CD8-positive, alpha-beta T cell (primary cell): ENCODE measurements at regions of chr15 and their contacts with region 1.

Region 1: GRCh38 chr15:74382004-74382816 is 14.8 kb upstream of the CYP11A1 start:
- DNase-seq: peak; percentile 49 to 88 (median 81)
- ATAC-seq: peak; percentile 27
- H3K4me3 ChIP-seq: no peak overlapping the region
- H3K4me3 Mint-ChIP-seq: no peak overlapping the region
- H3K27ac ChIP-seq: no peak overlapping the region
- H3K27ac Mint-ChIP-seq: no peak overlapping the region
- H3K4me1 ChIP-seq: peaks cover 36% of the 10 kb centered on the region
- H3K4me1 Mint-ChIP-seq: peaks cover 32% of the 10 kb centered on the region
- H3K27me3 ChIP-seq: no peaks in the 10 kb centered on the region
- H3K27me3 Mint-ChIP-seq: no peaks in the 10 kb centered on the region
- CTCF ChIP-seq: peak; percentile 97

Region 2: DNA sequence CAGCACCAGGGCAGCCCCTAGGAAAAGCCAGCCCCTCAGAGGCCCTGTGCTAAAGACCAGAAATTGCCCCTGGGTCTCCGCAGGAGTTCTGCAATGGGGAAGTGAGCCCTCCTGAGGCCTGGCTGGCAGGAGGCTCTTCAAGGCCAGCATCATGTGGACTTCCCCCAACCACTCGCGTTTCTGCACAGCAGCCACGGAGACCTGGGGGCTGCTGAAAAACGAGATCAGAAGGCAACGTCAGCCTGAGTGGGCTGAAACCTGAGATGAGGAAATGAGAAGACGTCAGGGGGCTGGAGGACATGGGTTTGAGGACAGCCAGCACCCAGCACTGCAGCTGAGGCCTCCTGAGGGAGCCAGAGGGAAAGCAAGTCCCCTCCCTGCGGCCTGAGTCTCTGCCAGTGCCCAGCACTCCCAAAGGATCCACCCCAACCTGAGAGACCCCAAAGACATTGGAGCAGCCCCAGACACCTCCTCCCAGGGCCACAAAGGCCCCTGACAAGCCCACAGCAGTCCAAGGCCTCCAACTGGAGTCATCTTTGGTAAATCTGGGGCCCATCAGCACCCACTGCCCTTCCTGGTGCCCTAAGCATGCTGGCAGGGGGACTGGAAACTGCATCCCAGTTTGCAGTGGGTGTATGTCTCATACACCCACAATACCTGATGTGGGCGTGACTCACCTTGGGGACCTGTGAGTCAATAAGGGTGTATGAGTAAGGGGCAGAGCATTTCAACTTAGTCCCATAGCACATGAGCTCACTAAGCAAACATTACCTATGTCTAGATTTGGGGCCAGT is 14.4 kb after region 1 on chr15:
- CTCF ChIA-PET with region 1: interaction called, 63 read pairs
- POLR2A ChIA-PET with region 1: interaction called, 6 read pairs
- intact Hi-C with region 1: loop called in 1 of 2 experiments (anchors 2 kb)
- DNase-seq: peak in 5 of 9 experiments; percentile 31 to 74 (median 49)
- ATAC-seq: peak; percentile 39
- H3K4me3 ChIP-seq: no peak overlapping the region
- H3K4me3 Mint-ChIP-seq: no peak overlapping the region
- H3K27ac ChIP-seq: no peak overlapping the region
- H3K27ac Mint-ChIP-seq: peak overlapping the region; percentile 69
- H3K4me1 ChIP-seq: peaks cover 54% of the 10 kb centered on the region
- H3K4me1 Mint-ChIP-seq: peaks cover 58% of the 10 kb centered on the region
- H3K27me3 ChIP-seq: no peaks in the 10 kb centered on the region
- H3K27me3 Mint-ChIP-seq: no peaks in the 10 kb centered on the region
- CTCF ChIP-seq: no peak

Region 3: DNA sequence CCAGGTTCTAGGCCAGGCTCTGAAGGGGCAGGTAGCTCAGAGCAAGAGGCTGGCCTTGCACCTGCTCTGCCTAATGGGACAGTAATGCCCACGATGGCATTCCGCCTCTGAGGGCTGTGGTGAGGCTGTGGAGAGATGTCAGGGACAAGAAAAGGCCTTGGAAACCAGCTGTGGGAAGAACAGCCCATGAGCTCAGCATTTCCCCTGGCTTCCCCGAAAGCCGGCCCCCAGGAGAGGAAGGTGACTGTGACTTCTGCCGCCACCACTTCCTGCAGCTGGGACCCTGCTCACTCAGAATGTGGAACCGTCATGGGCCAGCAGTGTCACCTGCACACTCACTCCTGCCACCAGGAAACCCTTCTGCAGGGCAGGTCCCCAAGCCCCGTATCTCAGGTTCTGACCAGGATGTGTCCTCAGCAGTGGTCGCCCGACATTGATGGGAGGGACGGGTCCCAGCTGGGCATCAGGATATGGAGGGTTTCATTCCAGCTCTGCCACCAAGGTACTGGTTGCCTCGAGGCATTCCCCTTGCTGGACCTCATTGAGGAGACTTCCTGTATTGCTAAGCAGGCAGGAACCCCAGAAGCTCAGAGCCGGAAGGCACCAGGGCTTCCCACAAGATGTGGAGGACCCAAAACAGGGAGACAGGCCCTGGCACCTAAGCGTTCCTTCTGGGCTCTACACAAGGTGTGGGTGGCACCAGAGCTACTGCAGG is 20.8 kb after region 1 on chr15:
- CTCF ChIA-PET with region 1: interaction called, 63 read pairs
- POLR2A ChIA-PET with region 1: interaction called, 9 read pairs
- intact Hi-C with region 1: loop called in 1 of 2 experiments (anchors 2 kb)
- DNase-seq: peak in 8 of 9 experiments; percentile 42 to 75 (median 62)
- ATAC-seq: peak; percentile 46
- H3K4me3 ChIP-seq: no peak overlapping the region
- H3K4me3 Mint-ChIP-seq: peak overlapping the region; percentile 45
- H3K27ac ChIP-seq: peak overlapping the region in 1 of 2 experiments; percentile 73
- H3K27ac Mint-ChIP-seq: peak overlapping the region; percentile 62
- H3K4me1 ChIP-seq: peaks cover 60% of the 10 kb centered on the region
- H3K4me1 Mint-ChIP-seq: peaks cover 64% of the 10 kb centered on the region
- H3K27me3 ChIP-seq: no peaks in the 10 kb centered on the region
- H3K27me3 Mint-ChIP-seq: no peaks in the 10 kb centered on the region
- CTCF ChIP-seq: no peak

Region 4: GRCh38 chr15:74433592-74434262 is 51.5 kb after region 1 on chr15 and contains the start of gene SEMA7A:
- CTCF ChIA-PET with region 1: interaction called, 717 read pairs
- POLR2A ChIA-PET with region 1: interaction called, 11 read pairs
- intact Hi-C with region 1: loop called (anchors 1 kb)
- DNase-seq: peak; percentile 49 to 91 (median 72)
- ATAC-seq: peak; percentile 81
- H3K4me3 ChIP-seq: peak within 1 kb of the TSS; percentile 56 to 68
- H3K4me3 Mint-ChIP-seq: peak within 1 kb of the TSS; percentile 80
- H3K27ac ChIP-seq: peak within 1 kb of the TSS; percentile 23 to 73
- H3K27ac Mint-ChIP-seq: peak within 1 kb of the TSS; percentile 57
- H3K4me1 ChIP-seq: peaks cover 16% of the 10 kb centered on the region
- H3K4me1 Mint-ChIP-seq: peaks cover 40% of the 10 kb centered on the region
- H3K27me3 ChIP-seq: no peaks in the 10 kb centered on the region
- H3K27me3 Mint-ChIP-seq: no peaks in the 10 kb centered on the region
- CTCF ChIP-seq: no peak
- total RNA-seq, gene SEMA7A: 8.8 to 9.4 TPM

Region 5: GRCh38 chr15:74489518-74490338 is 107.5 kb after region 1 on chr15:
- CTCF ChIA-PET with region 1: interaction called, 14 read pairs
- POLR2A ChIA-PET with region 1: no interaction called
- intact Hi-C with region 1: loop called in 1 of 2 experiments (anchors 2 kb)
- DNase-seq: peak; percentile 58 to 90 (median 79)
- ATAC-seq: peak; percentile 93
- H3K4me3 ChIP-seq: peak overlapping the region; percentile 14 to 18
- H3K4me3 Mint-ChIP-seq: peak overlapping the region; percentile 65
- H3K27ac ChIP-seq: peak overlapping the region in 1 of 2 experiments; percentile 55
- H3K27ac Mint-ChIP-seq: peak overlapping the region; percentile 83
- H3K4me1 ChIP-seq: peaks cover 19% of the 10 kb centered on the region
- H3K4me1 Mint-ChIP-seq: peaks cover 22% of the 10 kb centered on the region
- H3K27me3 ChIP-seq: no peaks in the 10 kb centered on the region
- H3K27me3 Mint-ChIP-seq: no peaks in the 10 kb centered on the region
- CTCF ChIP-seq: peak; percentile 59